ENCODE measurements at regions of chr16 and their contacts with region 1.

Region 1: DNA sequence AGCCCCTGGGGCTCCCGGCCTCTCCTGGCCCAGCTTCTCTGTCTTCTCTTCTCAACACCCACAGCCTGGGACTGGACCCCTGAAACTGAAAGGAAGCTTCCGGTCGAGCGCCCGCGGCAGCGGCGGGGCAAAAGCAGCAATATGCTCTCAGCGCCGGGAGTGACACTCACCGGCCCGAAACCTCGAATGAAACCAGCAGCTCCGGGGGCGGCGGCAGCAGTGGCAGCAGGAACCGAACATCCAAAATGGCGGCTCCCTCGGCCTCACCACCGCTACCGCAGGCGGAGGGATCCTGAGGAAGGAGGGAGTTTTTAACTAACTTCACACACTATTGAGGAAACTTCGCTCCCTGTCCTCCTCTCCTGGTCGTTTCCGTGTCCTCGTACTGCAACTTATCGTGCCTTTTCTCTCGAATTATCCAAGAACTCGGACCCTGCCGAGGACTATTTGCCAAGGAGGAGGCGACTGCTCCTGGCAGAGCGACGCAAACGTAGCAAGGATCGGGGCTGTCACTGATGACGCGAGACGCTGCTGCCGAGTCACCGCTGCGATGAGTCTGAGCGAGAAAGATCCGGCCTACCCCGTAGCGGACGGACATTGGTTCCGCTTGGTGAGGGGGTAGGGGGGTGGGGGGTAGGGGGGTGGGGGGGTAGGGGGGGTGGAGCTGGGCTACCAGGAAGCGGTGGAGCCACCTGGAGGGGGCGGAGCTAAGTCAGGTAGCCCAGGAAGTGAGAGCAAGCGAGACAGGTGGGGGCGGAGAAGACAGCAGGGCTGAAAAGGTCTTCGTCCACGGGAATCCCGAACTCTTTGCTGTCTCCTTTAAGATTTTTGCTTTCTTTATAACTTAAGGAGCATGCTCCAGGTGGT is at the start of gene AP1G1:
- DNase-seq: peak; percentile 95 to 98
- ATAC-seq: peak; percentile 95 to 98 (median 97)
- H3K4me3 ChIP-seq: peak within 1 kb of the TSS; percentile 99
- H3K27ac ChIP-seq: peak within 1 kb of the TSS; percentile 100
- H3K4me1 ChIP-seq: peaks cover 29% of the 10 kb centered on the region
- H3K27me3 ChIP-seq: no peaks in the 10 kb centered on the region
- CTCF ChIP-seq: no peak
- total RNA-seq, gene AP1G1: 54.1 to 69.8 (median 62.8) TPM

Region 2: GRCh38 chr16:71681360-71681980 is 127.4 kb before region 1 on chr16:
- intact Hi-C with region 1: no loop called
- DNase-seq: no peak
- ATAC-seq: no peak
- H3K4me3 ChIP-seq: no peak overlapping the region
- H3K27ac ChIP-seq: no peak overlapping the region
- H3K4me1 ChIP-seq: no peaks in the 10 kb centered on the region
- H3K27me3 ChIP-seq: no peaks in the 10 kb centered on the region
- CTCF ChIP-seq: no peak

Region 3: GRCh38 chr16:71775949-71776348 is 32.9 kb before region 1 on chr16:
- intact Hi-C with region 1: no loop called
- DNase-seq: no peak
- ATAC-seq: no peak
- H3K4me3 ChIP-seq: no peak overlapping the region
- H3K27ac ChIP-seq: no peak overlapping the region
- H3K4me1 ChIP-seq: peaks cover 15% of the 10 kb centered on the region
- H3K27me3 ChIP-seq: no peaks in the 10 kb centered on the region
- CTCF ChIP-seq: no peak

Region 4: GRCh38 chr16:71845639-71846430 is 37.0 kb after region 1 on chr16 and contains the start of gene ATXN1L:
- intact Hi-C with region 1: loop called (anchors 5 kb)
- DNase-seq: peak; percentile 93 to 96
- ATAC-seq: peak; percentile 94 to 96 (median 95)
- H3K4me3 ChIP-seq: peak within 1 kb of the TSS; percentile 100
- H3K27ac ChIP-seq: peak within 1 kb of the TSS; percentile 96
- H3K4me1 ChIP-seq: peaks cover 26% of the 10 kb centered on the region
- H3K27me3 ChIP-seq: no peaks in the 10 kb centered on the region
- CTCF ChIP-seq: no peak
- total RNA-seq, gene ATXN1L: 18.1 to 28.0 (median 22.4) TPM